Activated naive CD4-positive, alpha-beta T cell treated with anti-CD3 and anti-CD28 coated beads, Interleukin-2, amount 10 ng/mL, durations not matched to agents 7 days and 5 days (primary cell): ENCODE measurements at regions of chr2 and their contacts with region 1.

Region 1: GRCh38 chr2:74849228-74849892 is 15.4 kb downstream of the HK2 start:
- DNase-seq: peak; percentile 62
- H3K4me3 Mint-ChIP-seq: peak overlapping the region; percentile 66
- H3K27ac Mint-ChIP-seq: peak overlapping the region; percentile 97
- H3K4me1 Mint-ChIP-seq: peaks cover 77% of the 10 kb centered on the region
- H3K27me3 Mint-ChIP-seq: no peaks in the 10 kb centered on the region

Region 2: DNA sequence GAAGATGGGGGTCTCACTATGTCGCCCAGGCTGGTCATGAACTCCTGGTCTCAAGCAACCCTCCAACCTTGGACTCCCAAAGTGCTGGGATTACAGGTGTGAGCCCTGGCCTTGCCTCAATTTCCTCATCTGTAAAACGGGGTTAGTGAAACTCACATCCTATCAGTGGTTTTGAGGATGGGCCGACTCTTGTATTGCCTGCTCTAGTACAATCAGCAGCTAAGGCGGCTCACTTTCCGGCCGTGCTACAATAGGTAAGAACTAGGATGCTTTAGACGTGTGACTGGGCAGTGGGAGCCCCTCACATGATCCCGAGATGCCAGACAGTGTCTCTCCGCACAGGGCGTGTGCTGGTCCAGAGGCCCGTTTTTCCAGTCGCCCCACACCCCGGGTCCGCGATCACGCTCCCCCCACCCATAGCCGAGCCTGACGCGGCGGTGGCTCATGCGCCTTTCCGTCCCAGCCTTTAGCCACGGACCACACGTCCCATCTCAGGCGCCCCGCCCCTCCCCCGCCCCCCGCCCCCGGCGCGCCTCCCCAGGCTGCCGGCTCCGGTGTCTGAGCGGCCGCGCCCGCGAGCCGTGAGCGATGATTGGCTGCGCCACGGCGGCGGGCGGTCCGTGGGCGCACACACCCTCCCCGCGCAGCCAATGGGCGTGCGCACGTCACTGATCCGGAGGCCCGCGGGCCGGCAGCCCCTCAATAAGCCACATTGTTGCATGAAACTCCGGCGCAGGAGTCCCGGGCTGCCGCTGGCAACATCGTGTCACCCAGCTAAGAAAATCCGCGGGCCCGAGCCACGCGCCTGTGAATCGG is 15.7 kb before region 1 on chr2 and contains the start of gene HK2:
- CTCF ChIA-PET with region 1: interaction called, 52 read pairs
- DNase-seq: peak; percentile 88
- H3K4me3 Mint-ChIP-seq: peak within 1 kb of the TSS; percentile 95
- H3K27ac Mint-ChIP-seq: peak within 1 kb of the TSS; percentile 94
- H3K4me1 Mint-ChIP-seq: peaks cover 53% of the 10 kb centered on the region
- H3K27me3 Mint-ChIP-seq: peaks cover 4% of the 10 kb centered on the region